Endothelial cell of umbilical vein (primary cell): ENCODE measurements at regions of chr1 and their contacts with region 1.

Region 1: DNA sequence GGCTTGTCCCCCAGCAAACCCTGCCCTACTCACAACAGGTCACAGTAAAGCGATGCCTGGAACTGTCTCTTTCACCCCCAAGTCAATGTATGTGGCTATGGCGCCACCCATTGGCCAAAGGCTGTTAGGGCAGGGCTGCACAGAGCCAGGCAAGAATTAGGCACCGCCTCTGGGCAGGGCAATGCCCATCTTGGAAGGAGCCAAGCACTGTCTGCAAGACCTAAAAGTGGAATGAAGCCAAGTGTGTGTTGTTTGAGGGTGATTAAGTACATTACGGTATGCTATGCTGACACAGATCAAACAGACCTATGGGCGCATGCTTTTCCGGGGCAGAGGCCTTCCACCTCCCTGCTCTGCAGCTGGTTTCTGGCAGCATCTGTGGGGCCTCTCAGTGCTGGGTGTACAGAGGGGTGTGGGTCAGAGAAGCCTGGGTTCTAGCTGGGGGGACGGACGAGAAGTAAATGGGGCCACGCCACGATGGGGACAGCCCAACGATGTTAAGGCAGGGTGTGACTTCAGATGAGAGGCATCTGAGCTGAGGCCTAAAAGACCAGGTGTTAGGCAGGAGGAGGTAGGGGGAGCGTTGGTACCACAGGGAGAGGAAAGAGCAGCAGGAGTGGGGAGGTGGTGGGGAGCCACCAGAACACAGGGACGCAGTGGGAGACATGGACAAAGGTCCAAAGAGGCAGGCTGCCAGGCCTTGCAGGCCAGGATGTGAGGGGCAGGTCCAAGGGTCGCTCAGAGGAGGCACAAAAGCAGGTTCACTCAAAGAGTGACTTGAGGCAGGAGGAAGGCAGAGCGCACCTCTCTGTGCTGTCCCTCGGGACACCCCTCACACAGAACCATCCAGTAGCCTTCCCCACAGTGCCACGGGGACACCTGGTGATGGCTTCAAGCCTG is 49.8 kb downstream of the ACOT7 start:
- DNase-seq: peak; percentile 67
- H3K4me3 ChIP-seq: no peak overlapping the region
- H3K27ac ChIP-seq: no peak overlapping the region
- H3K4me1 ChIP-seq: peaks cover 7% of the 10 kb centered on the region
- H3K27me3 ChIP-seq: no peaks in the 10 kb centered on the region
- CTCF ChIP-seq: peak; percentile 89 to 94
- POLR2A ChIP-seq: no peak

Region 2: DNA sequence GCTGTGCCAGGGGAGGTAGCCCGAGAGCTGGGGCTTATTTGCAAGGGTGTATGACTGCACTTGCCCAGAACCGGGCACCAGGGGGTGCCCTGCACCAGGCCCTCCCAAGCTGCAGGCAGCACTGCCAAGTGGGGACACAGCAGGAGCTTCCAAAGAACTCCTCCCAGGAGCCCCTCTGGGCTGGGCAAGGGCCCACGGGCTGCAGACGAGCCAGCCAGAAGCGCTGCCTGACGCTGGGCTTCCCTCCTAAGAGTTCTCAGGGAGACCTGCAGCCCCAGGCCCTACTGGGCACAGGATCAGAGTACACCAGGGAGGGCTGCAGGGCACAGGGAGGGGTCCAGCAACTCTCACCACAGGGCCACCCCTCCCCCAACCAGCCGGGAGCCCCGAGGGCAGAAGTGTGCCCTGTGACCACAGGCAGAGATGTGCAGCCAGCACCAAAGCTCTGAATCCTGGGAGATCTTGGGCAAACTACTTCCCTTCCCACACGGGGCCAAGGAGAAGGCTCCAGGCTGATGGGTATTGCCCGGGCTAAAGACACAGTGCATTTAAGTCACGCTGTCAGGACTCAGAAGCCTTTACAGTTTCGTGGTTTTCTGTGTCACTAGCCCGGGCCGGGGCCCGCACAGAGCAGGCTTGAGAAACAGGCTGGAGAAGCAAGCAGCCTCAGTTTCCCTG is 234.7 kb before region 1 on chr1:
- CTCF ChIA-PET with region 1: interaction called, 3 read pairs
- POLR2A ChIA-PET with region 1: no interaction called
- dilution Hi-C with region 1: no loop called
- intact Hi-C with region 1: loop called (anchors 10 kb)
- DNase-seq: peak; percentile 39
- H3K4me3 ChIP-seq: no peak overlapping the region
- H3K27ac ChIP-seq: no peak overlapping the region
- H3K4me1 ChIP-seq: no peaks in the 10 kb centered on the region
- H3K27me3 ChIP-seq: no peaks in the 10 kb centered on the region
- CTCF ChIP-seq: peak; percentile 35 to 77
- POLR2A ChIP-seq: no peak

Region 3: DNA sequence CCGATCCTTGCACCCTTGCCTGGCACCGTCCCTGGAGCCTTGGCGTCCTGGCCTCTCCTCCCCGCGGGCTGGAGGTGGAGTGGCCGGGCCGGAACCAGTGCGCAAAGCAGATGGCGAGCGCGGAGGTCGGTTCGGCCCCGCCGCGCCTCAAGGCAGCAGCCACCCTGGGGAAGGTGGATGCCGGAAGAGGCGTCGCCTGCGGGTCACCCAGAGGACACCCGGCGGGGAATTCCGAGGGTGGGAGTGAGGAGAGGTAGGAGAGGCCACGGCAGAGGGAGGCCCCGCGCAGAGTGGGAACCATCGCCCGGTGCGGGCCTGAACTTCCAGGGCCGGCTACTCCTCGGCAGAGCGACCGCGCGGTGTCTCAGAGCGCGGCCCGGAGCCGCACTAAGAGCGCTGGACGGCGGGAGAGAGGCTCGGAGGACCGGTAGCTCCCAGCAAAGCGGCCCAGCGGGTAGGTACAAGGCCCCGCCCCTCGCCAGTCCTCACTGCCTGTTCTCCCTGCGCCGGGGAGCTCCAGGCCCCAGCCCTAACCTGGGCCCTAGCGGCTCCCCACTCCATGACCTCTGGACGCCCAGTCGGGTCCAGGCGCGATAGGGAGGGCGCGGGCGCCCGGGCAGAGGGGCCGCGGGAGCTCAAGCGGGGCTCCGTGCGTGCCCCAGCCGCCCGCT is 137.8 kb before region 1 on chr1 and contains the start of gene RNF207:
- CTCF ChIA-PET with region 1: interaction called, 10 read pairs
- POLR2A ChIA-PET with region 1: no interaction called
- dilution Hi-C with region 1: no loop called
- intact Hi-C with region 1: no loop called
- DNase-seq: peak; percentile 18
- H3K4me3 ChIP-seq: peak within 1 kb of the TSS; percentile 23 to 59 (median 38)
- H3K27ac ChIP-seq: peak within 1 kb of the TSS; percentile 43
- H3K4me1 ChIP-seq: peaks cover 22% of the 10 kb centered on the region
- H3K27me3 ChIP-seq: peaks cover 6 to 11% of the 10 kb centered on the region in 2 experiments
- CTCF ChIP-seq: no peak
- POLR2A ChIP-seq: no peak
- total RNA-seq, gene RNF207: 2.4 and 8.2 TPM in 2 replicates

Region 4: GRCh38 chr1:6359216-6360116 is 15.7 kb after region 1 on chr1:
- CTCF ChIA-PET with region 1: interaction called, 26 read pairs
- POLR2A ChIA-PET with region 1: no interaction called
- dilution Hi-C with region 1: no loop called
- intact Hi-C with region 1: loop called (anchors 1 kb)
- DNase-seq: peak; percentile 88
- H3K4me3 ChIP-seq: no peak overlapping the region
- H3K27ac ChIP-seq: peak overlapping the region; percentile 60
- H3K4me1 ChIP-seq: peaks cover 20% of the 10 kb centered on the region
- H3K27me3 ChIP-seq: no peaks in the 10 kb centered on the region
- CTCF ChIP-seq: peak in 1 of 2 donors; percentile 21
- POLR2A ChIP-seq: no peak

Region 5: GRCh38 chr1:6378096-6378746 is 34.5 kb after region 1 on chr1:
- CTCF ChIA-PET with region 1: no interaction called
- POLR2A ChIA-PET with region 1: no interaction called
- dilution Hi-C with region 1: no loop called
- intact Hi-C with region 1: no loop called
- DNase-seq: no peak
- H3K4me3 ChIP-seq: no peak overlapping the region
- H3K27ac ChIP-seq: no peak overlapping the region
- H3K4me1 ChIP-seq: no peaks in the 10 kb centered on the region
- H3K27me3 ChIP-seq: no peaks in the 10 kb centered on the region
- CTCF ChIP-seq: peak in 1 of 2 donors; percentile 21
- POLR2A ChIP-seq: no peak

Region 6: GRCh38 chr1:6401673-6402072 is 57.9 kb after region 1 on chr1:
- CTCF ChIA-PET with region 1: interaction called, 38 read pairs
- POLR2A ChIA-PET with region 1: no interaction called
- dilution Hi-C with region 1: no loop called
- intact Hi-C with region 1: loop called (anchors 1 kb)
- DNase-seq: no peak
- H3K4me3 ChIP-seq: no peak overlapping the region
- H3K27ac ChIP-seq: no peak overlapping the region
- H3K4me1 ChIP-seq: no peaks in the 10 kb centered on the region
- H3K27me3 ChIP-seq: no peaks in the 10 kb centered on the region
- CTCF ChIP-seq: no peak
- POLR2A ChIP-seq: no peak

Region 7: GRCh38 chr1:6414443-6414844 is 70.7 kb after region 1 on chr1:
- CTCF ChIA-PET with region 1: interaction called, 20 read pairs
- POLR2A ChIA-PET with region 1: no interaction called
- dilution Hi-C with region 1: no loop called
- intact Hi-C with region 1: no loop called
- DNase-seq: peak; percentile 52
- H3K4me3 ChIP-seq: no peak overlapping the region
- H3K27ac ChIP-seq: no peak overlapping the region
- H3K4me1 ChIP-seq: peaks cover 8% of the 10 kb centered on the region
- H3K27me3 ChIP-seq: peaks cover 4 to 8% of the 10 kb centered on the region in 2 experiments
- CTCF ChIP-seq: peak; percentile 53 to 77
- POLR2A ChIP-seq: no peak